Activated naive CD4-positive, alpha-beta T cell treated with anti-CD3 and anti-CD28 coated beads for 36 hours (primary cell): ENCODE measurements at regions of chr7 and their contacts with region 1.

Region 1: DNA sequence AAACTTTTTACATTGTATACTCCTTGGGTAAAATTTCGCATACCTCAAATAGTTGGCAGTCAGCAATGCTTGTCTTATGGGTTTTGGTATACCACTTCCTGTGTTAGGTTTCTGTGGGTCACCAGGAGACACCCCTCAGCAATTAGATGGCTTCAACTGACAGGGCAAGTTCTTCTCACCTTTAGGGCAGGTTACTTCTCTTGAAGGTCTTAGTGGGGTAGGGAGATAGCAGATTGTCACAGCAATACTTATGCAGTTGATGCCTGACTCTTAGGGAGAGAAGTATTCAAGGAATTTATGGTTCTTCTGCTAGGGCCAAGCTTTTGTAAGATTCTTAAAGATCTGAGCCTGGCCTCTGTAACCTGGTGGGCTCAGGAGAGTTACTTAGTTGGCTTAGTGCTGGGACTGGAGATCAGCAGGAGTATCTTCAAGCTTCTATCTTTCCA is 42.9 kb downstream of the MKLN1 start:
- DNase-seq: peak; percentile 15
- H3K4me3 Mint-ChIP-seq: no peak overlapping the region
- H3K27ac Mint-ChIP-seq: no peak overlapping the region
- H3K4me1 Mint-ChIP-seq: peaks cover 66% of the 10 kb centered on the region
- H3K27me3 Mint-ChIP-seq: no peaks in the 10 kb centered on the region

Region 2: DNA sequence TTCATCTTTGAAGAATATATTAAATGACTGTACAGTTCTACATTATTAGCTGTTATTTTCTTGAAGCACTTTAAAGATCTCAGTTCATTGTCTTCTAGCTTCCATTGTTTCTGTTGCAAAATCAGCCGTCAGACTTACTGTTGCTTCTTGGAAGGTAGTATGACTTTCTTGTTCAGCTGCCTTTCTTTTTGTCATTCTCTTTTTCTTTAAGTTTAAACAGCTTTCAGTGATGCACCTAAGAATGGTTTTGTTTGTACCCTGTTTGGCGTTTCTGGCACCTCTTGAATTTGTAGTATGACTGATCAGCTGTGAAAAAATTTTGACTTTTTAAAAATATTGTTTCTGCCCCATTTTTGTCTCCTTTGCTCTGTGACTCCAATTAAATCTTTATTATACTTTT is 33.6 kb before region 1 on chr7:
- CTCF ChIA-PET with region 1: no interaction called
- intact Hi-C with region 1: loop called (anchors 2 kb)
- DNase-seq: no peak
- H3K4me3 Mint-ChIP-seq: no peak overlapping the region
- H3K27ac Mint-ChIP-seq: no peak overlapping the region
- H3K4me1 Mint-ChIP-seq: peaks cover 45% of the 10 kb centered on the region
- H3K27me3 Mint-ChIP-seq: no peaks in the 10 kb centered on the region

Region 3: GRCh38 chr7:131355921-131356777 is 14.4 kb before region 1 on chr7:
- CTCF ChIA-PET with region 1: no interaction called
- intact Hi-C with region 1: loop called (anchors 1 kb)
- DNase-seq: no peak
- H3K4me3 Mint-ChIP-seq: no peak overlapping the region
- H3K27ac Mint-ChIP-seq: no peak overlapping the region
- H3K4me1 Mint-ChIP-seq: peaks cover 71% of the 10 kb centered on the region
- H3K27me3 Mint-ChIP-seq: no peaks in the 10 kb centered on the region

Region 4: GRCh38 chr7:132584796-132585494 is 1214.4 kb after region 1 on chr7:
- CTCF ChIA-PET with region 1: no interaction called
- intact Hi-C with region 1: no loop called
- DNase-seq: no peak
- H3K4me3 Mint-ChIP-seq: no peak overlapping the region
- H3K27ac Mint-ChIP-seq: no peak overlapping the region
- H3K4me1 Mint-ChIP-seq: no peaks in the 10 kb centered on the region
- H3K27me3 Mint-ChIP-seq: peaks cover 4% of the 10 kb centered on the region